Right lobe of liver (tissue), 6 donors: ENCODE measurements at regions of chr16 and their contacts with region 1.

Region 1: DNA sequence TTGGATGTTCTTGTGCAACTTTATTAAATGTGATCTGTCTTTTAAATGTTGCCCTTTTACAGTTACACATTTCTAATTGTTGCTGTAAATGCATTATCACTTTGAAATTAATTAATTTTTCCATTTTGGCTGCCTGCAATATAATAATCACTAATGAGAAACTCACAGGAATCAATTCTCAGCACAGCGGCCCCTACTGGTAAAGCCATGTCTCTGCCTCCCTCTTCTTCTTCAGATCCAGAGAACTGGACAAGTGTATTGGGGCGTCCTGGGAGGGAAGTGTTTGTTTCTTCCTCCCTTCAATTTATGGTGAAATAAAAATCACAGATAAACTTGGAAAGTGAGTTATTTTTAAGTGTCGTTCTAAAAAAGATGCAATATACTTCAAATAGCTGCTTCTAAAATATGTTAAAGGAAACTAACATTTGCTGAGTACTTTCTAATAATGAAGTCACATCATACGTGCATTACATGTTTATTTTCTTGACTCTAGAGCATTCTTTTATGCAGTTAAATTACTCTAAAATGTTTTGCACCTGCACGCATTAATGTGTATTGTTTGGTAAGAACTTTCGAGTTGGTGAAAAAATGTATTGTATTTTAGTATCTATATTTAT is 338.0 kb downstream of the WWOX start:
- DNase-seq: peak in 1 of 3 donors; percentile 38
- ATAC-seq: peak; percentile 72 to 75 (median 74)
- H3K4me3 ChIP-seq: no peak overlapping the region
- H3K27ac ChIP-seq: no peak overlapping the region
- H3K4me1 ChIP-seq: no peaks in the 10 kb centered on the region
- H3K27me3 ChIP-seq: no peaks in the 10 kb centered on the region
- CTCF ChIP-seq: peak; percentile 65 to 94 (median 92)
- POLR2A ChIP-seq: no peak

Region 2: GRCh38 chr16:78249068-78249467 is 188.4 kb before region 1 on chr16:
- intact Hi-C with region 1: loop called in 1 of 2 experiments (anchors 5 kb)
- DNase-seq: peak; percentile 85 to 87 (median 85)
- ATAC-seq: peak; percentile 91 to 94 (median 92)
- H3K4me3 ChIP-seq: no peak overlapping the region
- H3K27ac ChIP-seq: peak overlapping the region in 2 of 3 donors; percentile 33 to 39
- H3K4me1 ChIP-seq: peaks cover 0 to 29% (median 5%) of the 10 kb centered on the region in 4 donors
- H3K27me3 ChIP-seq: no peaks in the 10 kb centered on the region
- CTCF ChIP-seq: peak; percentile 49 to 65 (median 55)
- POLR2A ChIP-seq: no peak